GM18951 (cell line): ENCODE measurements at regions of chr4 and their contacts with region 1.

Region 1: GRCh38 chr4:22410645-22411247 is 105.1 kb downstream of the ADGRA3 start:
- POLR2A ChIP-seq: no peak

Region 2: GRCh38 chr4:22692736-22693135 is 282.0 kb after region 1 on chr4 and contains the start of gene GBA3:
- in situ Hi-C with region 1: loop called (anchors 10 kb)
- POLR2A ChIP-seq: no peak